Natural killer cell (primary cell): ENCODE measurements at regions of chr1 and their contacts with region 1.

Region 1: GRCh38 chr1:224427346-224427745 is 7.3 kb downstream of the WDR26 start:
- DNase-seq: no peak
- ATAC-seq: no peak
- H3K4me3 ChIP-seq: no peak overlapping the region
- H3K4me3 Mint-ChIP-seq: no peak overlapping the region
- H3K27ac ChIP-seq: no peak overlapping the region
- H3K27ac Mint-ChIP-seq: peak overlapping the region; percentile 48 to 59
- H3K4me1 ChIP-seq: peaks cover 3% of the 10 kb centered on the region
- H3K4me1 Mint-ChIP-seq: peaks cover 50 to 59% of the 10 kb centered on the region in 2 donors
- H3K27me3 ChIP-seq: no peaks in the 10 kb centered on the region
- H3K27me3 Mint-ChIP-seq: no peaks in the 10 kb centered on the region
- CTCF ChIP-seq: no peak

Region 2: GRCh38 chr1:224411766-224412165 is 15.6 kb before region 1 on chr1:
- intact Hi-C with region 1: loop called (anchors 1 kb)
- DNase-seq: no peak
- ATAC-seq: peak; percentile 44 to 61 (median 44)
- H3K4me3 ChIP-seq: no peak overlapping the region
- H3K4me3 Mint-ChIP-seq: no peak overlapping the region
- H3K27ac ChIP-seq: no peak overlapping the region
- H3K27ac Mint-ChIP-seq: peak overlapping the region; percentile 75 to 80
- H3K4me1 ChIP-seq: peaks cover 5% of the 10 kb centered on the region
- H3K4me1 Mint-ChIP-seq: peaks cover 21 to 36% of the 10 kb centered on the region in 2 donors
- H3K27me3 ChIP-seq: no peaks in the 10 kb centered on the region
- H3K27me3 Mint-ChIP-seq: no peaks in the 10 kb centered on the region
- CTCF ChIP-seq: no peak